Body of pancreas (tissue), 4 donors: ENCODE measurements at regions of chr1 and their contacts with region 1.

Region 1: GRCh38 chr1:210400043-210400840 is 71.5 kb downstream of the HHAT start:
- DNase-seq: peak; percentile 41 to 61 (median 58)
- ATAC-seq: peak; percentile 83
- H3K4me3 ChIP-seq: no peak overlapping the region
- H3K27ac ChIP-seq: no peak overlapping the region
- H3K4me1 ChIP-seq: no peaks in the 10 kb centered on the region
- H3K27me3 ChIP-seq: no peaks in the 10 kb centered on the region
- CTCF ChIP-seq: peak; percentile 59 to 80 (median 70)
- POLR2A ChIP-seq: no peak

Region 2: GRCh38 chr1:210467440-210468043 is 67.3 kb after region 1 on chr1:
- intact Hi-C with region 1: no loop called
- DNase-seq: no peak
- ATAC-seq: no peak
- H3K4me3 ChIP-seq: no peak overlapping the region
- H3K27ac ChIP-seq: no peak overlapping the region
- H3K4me1 ChIP-seq: no peaks in the 10 kb centered on the region
- H3K27me3 ChIP-seq: no peaks in the 10 kb centered on the region
- CTCF ChIP-seq: no peak
- POLR2A ChIP-seq: no peak

Region 3: GRCh38 chr1:211133836-211134669 is 733.8 kb after region 1 on chr1 and contains the start of gene KCNH1:
- intact Hi-C with region 1: loop called (anchors 10 kb)
- DNase-seq: peak; percentile 64 to 77 (median 70)
- ATAC-seq: peak; percentile 89
- H3K4me3 ChIP-seq: peak within 1 kb of the TSS in 1 of 2 donors; percentile 8
- H3K27ac ChIP-seq: no peak within 1 kb of the TSS
- H3K4me1 ChIP-seq: peaks cover 15% of the 10 kb centered on the region
- H3K27me3 ChIP-seq: peaks cover 0 to 5% of the 10 kb centered on the region in 2 donors
- CTCF ChIP-seq: peak; percentile 56 to 95 (median 73)
- POLR2A ChIP-seq: no peak
- total RNA-seq, gene KCNH1: 0.52 TPM in 1 of 2 donors, not detected in the other